ENCODE measurements at regions of chr9 and their contacts with region 1.

Region 1: DNA sequence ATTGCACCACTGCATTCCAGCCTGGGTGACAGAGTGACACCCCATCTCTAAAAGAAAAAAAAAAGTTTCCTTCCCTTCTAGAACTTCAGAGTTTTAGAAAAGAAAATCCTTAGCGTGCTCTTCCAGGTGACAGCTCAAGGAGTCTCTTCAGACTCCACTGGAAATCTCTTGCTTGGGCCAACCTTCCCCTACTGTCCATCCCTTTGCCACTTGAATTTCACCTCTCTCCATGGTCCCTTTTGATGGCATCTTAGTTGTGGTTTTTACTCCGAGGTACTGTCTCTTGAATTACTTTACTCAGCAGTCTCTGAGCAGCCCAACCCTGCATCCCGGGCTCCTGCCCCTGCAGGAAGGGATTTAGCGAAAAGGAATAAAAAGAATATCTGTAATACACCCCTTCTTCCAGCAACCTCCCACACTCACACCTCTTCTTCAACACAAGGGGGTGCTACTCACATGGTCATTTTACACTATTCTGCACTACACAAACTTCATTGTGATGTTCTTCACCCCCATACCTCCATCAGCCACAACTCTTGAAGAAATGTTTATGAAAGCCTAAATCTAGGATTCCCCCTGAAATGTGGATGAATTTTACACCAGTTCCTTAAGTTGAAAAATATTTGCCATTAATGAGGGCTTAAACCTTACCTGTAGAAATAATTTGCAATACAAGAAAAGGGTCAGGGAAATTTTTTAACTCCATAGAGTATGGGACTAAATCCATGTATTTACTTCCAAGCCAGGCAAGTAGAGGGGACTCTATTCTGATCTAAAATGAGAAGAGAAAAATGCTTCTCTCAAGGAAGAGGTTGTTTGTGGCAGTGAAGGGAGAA is 25.9 kb downstream of the TPD52L3 start:
- DNase-seq: no peak
- H3K4me3 ChIP-seq: no peak overlapping the region
- H3K27ac ChIP-seq: no peak overlapping the region
- H3K4me1 ChIP-seq: no peaks in the 10 kb centered on the region
- H3K27me3 ChIP-seq: no peaks in the 10 kb centered on the region
- CTCF ChIP-seq: peak; percentile 70 to 80 (median 73)
- EP300 ChIP-seq: no peak
- POLR2A ChIP-seq: no peak

Region 2: GRCh38 chr9:6667633-6668280 is 313.7 kb after region 1 on chr9:
- intact Hi-C with region 1: loop called (anchors 10 kb)
- DNase-seq: no peak
- H3K4me3 ChIP-seq: no peak overlapping the region
- H3K27ac ChIP-seq: no peak overlapping the region
- H3K4me1 ChIP-seq: no peaks in the 10 kb centered on the region
- H3K27me3 ChIP-seq: no peaks in the 10 kb centered on the region
- CTCF ChIP-seq: peak; percentile 27 to 54 (median 39)
- EP300 ChIP-seq: no peak
- POLR2A ChIP-seq: no peak